Endothelial cell of umbilical vein (primary cell): ENCODE measurements at regions of chr3 and their contacts with region 1.

Region 1: GRCh38 chr3:22887664-22888291 is 315.3 kb upstream of the UBE2E2 start:
- DNase-seq: peak; percentile 4
- H3K4me3 ChIP-seq: no peak overlapping the region
- H3K27ac ChIP-seq: no peak overlapping the region
- H3K4me1 ChIP-seq: no peaks in the 10 kb centered on the region
- H3K27me3 ChIP-seq: no peaks in the 10 kb centered on the region
- CTCF ChIP-seq: peak in 1 of 2 donors; percentile 17
- POLR2A ChIP-seq: no peak

Region 2: DNA sequence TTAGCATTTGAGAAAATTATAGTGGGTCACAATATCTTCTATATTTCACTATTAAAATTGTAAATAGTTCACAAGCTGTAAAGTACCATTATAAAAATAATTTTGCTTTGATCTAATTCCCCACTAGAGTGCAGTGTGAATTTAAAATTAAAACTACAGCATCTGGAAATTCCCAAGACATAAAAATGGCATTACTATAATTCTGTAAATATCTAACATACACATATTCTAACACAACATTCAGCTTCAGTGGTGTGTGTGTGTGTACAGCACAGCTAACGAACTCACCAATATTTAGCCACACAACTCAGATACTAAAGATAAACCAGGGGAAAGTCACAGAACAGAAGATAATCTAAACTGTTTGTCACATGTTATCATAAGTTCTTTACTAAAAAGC is 711.8 kb before region 1 on chr3:
- CTCF ChIA-PET with region 1: interaction called, 10 read pairs
- POLR2A ChIA-PET with region 1: no interaction called
- dilution Hi-C with region 1: no loop called
- intact Hi-C with region 1: loop called (anchors 2 kb)
- DNase-seq: no peak
- H3K4me3 ChIP-seq: no peak overlapping the region
- H3K27ac ChIP-seq: no peak overlapping the region
- H3K4me1 ChIP-seq: no peaks in the 10 kb centered on the region
- H3K27me3 ChIP-seq: no peaks in the 10 kb centered on the region
- CTCF ChIP-seq: no peak
- POLR2A ChIP-seq: no peak

Region 3: DNA sequence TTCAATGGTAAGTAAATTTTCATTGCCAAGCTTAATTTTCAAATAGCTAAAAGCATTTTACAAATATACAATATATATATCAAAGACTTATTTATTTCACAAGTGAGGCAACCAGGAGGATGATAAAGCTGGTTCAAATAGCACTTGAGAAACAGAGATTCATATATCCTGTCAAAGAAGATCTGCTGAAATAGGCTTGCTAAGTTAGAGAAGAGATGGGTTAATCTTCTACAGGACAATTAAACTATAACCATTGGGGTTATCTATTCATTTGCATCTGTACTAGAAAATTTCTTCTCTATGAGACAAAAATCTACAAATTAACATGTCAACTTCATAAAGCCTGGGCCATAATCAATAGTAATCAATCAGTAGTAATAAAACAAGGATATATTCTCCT is 322.4 kb before region 1 on chr3:
- CTCF ChIA-PET with region 1: interaction called, 19 read pairs
- POLR2A ChIA-PET with region 1: no interaction called
- dilution Hi-C with region 1: no loop called
- intact Hi-C with region 1: loop called (anchors 10 kb)
- DNase-seq: no peak
- H3K4me3 ChIP-seq: no peak overlapping the region
- H3K27ac ChIP-seq: no peak overlapping the region
- H3K4me1 ChIP-seq: no peaks in the 10 kb centered on the region
- H3K27me3 ChIP-seq: no peaks in the 10 kb centered on the region
- CTCF ChIP-seq: no peak
- POLR2A ChIP-seq: no peak

Region 4: DNA sequence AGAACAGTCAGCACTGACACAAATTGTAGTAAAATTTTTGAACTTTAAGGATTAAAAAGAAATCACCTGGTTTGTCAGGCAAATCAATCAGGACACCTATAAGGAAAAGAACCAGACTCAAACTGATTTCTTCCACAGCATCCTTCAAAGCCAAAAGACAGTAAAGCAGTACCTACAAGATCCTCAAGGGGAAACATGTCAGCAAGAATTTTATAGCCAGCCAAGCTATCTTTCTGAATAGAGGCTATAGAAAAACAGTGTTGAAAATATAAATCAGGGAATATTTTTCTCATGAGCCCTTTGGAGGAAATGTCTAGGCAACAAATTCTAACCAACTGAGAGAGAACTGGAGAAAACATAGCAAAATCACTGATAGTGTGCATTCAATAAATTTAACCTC is 13.9 kb after region 1 on chr3:
- CTCF ChIA-PET with region 1: interaction called, 10 read pairs
- POLR2A ChIA-PET with region 1: no interaction called
- dilution Hi-C with region 1: no loop called
- intact Hi-C with region 1: no loop called
- DNase-seq: no peak
- H3K4me3 ChIP-seq: no peak overlapping the region
- H3K27ac ChIP-seq: no peak overlapping the region
- H3K4me1 ChIP-seq: no peaks in the 10 kb centered on the region
- H3K27me3 ChIP-seq: no peaks in the 10 kb centered on the region
- CTCF ChIP-seq: no peak
- POLR2A ChIP-seq: no peak